Right ventricle myocardium inferior (tissue), 1 donor: ENCODE measurements at regions of chr13 and their contacts with region 1.

Region 1: DNA sequence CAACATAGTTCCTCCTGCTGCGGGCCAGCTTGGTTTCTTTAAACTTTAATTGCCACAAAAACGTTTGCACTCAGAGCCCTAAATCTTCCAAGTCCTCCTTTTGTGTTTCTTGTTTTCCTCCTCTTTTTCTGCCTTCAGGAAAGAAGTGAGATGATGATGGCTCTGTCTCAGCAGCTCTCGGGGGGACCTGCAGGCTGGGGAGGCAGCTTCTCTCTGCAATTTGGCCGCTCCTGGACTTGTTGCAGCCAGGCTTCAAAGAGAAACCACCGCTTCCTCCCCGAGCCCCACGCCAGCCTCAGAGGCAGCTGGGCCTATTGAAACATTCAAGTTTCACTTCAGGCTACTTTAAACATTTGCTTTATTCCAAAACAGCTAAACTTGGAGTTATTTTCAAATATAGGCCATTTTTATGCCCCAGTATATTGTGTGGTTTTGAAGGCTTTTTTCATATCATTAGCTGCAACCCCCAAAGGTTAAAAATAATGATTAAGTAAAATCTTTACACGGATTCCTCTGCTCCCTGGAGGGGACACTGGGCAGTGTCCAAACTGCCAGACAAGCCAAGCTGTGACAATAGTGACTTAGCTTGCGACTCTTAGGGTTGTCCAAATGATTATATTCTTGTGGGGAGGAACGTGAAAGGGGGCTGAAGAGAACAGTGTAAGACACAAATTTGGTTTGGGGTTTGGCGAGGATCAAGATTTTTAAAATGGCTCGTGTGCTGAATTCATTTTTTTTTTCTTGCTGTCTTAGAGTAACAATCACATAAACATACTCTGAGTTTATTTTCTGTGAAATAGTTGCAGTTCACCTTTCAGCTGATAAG is 330.8 kb downstream of the DLEU7 start:
- DNase-seq: peak; percentile 78
- ATAC-seq: peak; percentile 85

Region 2: GRCh38 chr13:50123862-50124536 is 388.7 kb before region 1 on chr13:
- intact Hi-C with region 1: loop called (anchors 5 kb)
- DNase-seq: no peak
- ATAC-seq: peak; percentile 92